ENCODE measurements at regions of chr12 and their contacts with region 1.

Region 1: DNA sequence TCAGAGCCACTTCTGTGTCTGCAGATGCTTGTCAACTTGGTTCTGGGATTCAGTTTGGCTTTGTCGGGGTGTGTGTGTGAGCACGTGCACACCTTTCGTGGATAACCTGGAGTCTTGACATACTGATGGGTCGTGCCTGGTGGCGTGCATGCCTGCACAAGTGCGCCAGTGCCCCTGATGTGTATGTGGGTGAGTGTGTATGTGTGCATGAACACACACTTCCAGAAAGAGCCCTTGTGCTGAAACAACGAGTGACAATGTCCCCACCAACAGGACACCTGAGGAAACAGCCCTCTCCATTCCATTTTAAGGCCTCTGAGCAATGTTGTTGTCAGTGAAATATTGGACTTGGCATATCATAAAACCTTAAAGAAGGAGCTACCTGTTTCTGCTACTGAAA is 53.9 kb downstream of the SMUG1 start:
- DNase-seq: peak; percentile 15
- H3K4me3 Mint-ChIP-seq: no peak overlapping the region
- H3K27ac Mint-ChIP-seq: no peak overlapping the region
- H3K4me1 Mint-ChIP-seq: peaks cover 45% of the 10 kb centered on the region
- H3K27me3 Mint-ChIP-seq: no peaks in the 10 kb centered on the region
- CTCF ChIP-seq: no peak

Region 2: DNA sequence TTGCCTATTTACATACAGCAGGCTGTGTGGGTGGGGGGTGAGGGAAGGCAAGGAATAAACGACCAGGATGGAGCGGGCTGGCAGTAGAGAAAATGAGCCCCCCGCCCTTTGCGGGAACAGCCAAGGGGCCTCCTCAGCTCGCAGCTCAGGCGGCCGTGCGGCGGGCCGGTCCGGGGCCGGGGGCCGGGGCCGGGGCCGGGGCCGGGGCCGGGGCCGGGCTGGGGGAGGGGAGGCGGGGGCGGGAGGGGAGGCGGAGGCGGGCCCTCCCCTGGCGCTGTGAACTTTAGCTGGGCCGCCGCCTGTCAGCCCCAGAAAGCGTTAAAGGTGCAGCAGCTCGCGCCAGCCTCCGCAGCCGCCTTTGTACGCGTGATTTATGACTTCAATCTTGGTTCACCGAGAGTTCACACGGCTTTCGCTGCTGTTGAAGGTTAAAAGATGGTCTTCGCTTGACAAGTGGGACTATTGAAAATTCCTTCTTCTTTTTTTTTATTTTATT is 52.4 kb before region 1 on chr12:
- CTCF ChIA-PET with region 1: no interaction called
- intact Hi-C with region 1: loop called (anchors 5 kb)
- DNase-seq: peak; percentile 38
- H3K4me3 Mint-ChIP-seq: peak overlapping the region; percentile 44
- H3K27ac Mint-ChIP-seq: no peak overlapping the region
- H3K4me1 Mint-ChIP-seq: no peaks in the 10 kb centered on the region
- H3K27me3 Mint-ChIP-seq: peaks cover 78% of the 10 kb centered on the region
- CTCF ChIP-seq: no peak

Region 3: DNA sequence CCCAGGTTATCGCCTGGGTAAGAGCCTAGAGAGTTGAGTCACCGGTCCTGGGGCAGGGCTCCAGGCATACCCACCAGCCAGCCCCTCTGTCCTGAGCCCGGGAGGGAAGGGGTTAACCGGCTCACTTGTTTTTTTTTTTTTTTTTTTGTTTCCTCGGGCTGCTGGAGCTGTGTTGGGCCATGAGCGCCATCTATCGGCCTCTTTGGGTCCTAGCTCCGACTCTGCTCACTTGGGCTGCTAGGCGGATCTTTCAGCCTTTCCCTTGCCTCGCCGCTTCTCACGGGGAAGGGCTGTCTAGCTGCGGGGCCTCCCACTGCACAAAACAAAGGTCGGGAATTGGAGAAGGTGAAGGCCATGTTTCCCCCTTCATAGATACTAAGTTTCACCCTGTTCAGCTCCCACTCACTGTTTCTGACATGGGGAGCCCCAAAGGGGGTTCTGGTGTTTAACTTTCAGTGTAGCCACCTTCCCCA is 56.7 kb after region 1 on chr12:
- CTCF ChIA-PET with region 1: interaction called, 14 read pairs
- intact Hi-C with region 1: loop called (anchors 5 kb)
- DNase-seq: peak; percentile 85
- H3K4me3 Mint-ChIP-seq: no peak overlapping the region
- H3K27ac Mint-ChIP-seq: no peak overlapping the region
- H3K4me1 Mint-ChIP-seq: peaks cover 24% of the 10 kb centered on the region
- H3K27me3 Mint-ChIP-seq: peaks cover 66% of the 10 kb centered on the region
- CTCF ChIP-seq: peak; percentile 76

Region 4: DNA sequence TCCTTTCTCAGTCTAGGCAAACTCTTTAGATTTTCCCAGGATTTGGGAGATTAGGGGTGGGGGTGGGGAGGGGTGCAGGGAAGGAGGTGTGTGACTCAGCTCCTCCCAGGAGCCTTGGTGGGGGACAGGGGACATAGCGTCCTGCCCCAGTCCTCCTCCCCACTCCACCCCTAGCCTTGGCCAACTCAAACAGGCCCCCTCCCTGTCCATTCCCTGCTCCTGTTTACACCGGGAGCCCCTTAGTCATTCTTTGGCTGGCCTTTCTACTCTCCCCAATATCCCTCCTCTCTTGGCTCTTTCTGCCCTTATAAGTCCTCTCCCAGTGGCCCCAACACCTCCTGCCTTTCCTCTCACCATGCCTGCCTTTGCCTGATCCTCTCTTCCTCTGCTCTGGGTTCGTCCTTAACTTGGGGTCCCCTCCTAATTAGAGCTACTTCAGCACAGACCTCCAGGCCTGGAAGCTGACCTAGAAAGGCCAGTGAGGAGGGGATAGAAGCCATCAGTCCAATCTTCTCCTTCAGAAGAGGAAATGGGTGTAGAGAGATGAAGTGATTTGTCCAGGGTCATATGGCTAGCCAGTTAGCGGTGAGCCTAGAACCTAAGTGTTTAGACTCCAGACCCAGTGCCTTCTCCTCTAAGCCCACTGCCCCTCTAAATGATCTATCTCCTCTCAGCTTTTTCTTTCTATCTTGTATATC is 286.5 kb after region 1 on chr12:
- CTCF ChIA-PET with region 1: no interaction called
- intact Hi-C with region 1: loop called (anchors 5 kb)
- DNase-seq: no peak
- H3K4me3 Mint-ChIP-seq: no peak overlapping the region
- H3K27ac Mint-ChIP-seq: no peak overlapping the region
- H3K4me1 Mint-ChIP-seq: peaks cover 31% of the 10 kb centered on the region
- H3K27me3 Mint-ChIP-seq: peaks cover 57% of the 10 kb centered on the region
- CTCF ChIP-seq: no peak